ENCODE measurements at regions of chr11 and their contacts with region 1.

Region 1: DNA sequence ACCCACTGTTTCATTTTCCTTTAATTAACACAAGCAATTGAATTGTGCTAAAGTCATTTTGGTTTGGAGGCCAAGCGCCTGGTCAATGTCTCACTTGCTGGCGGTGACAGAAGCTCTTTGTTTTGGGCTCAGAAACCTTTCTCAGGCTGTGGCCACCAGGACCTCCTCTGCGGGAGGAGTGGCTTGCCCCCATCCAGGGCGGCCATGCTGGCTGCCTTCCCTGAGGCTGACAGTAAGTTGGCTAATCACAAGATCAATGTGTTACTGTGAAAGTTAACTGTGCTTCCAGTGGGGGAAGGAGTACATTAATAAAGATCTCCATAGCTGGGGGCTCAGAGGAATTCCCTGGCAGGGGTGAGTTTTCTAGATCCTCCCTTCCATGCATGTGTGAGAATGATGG is 1074.5 kb downstream of the NTM start:
- DNase-seq: no peak
- H3K4me3 ChIP-seq: no peak overlapping the region
- H3K27ac ChIP-seq: no peak overlapping the region
- H3K4me1 ChIP-seq: no peaks in the 10 kb centered on the region
- H3K27me3 ChIP-seq: no peaks in the 10 kb centered on the region
- CTCF ChIP-seq: no peak
- POLR2A ChIP-seq: no peak

Region 2: GRCh38 chr11:132650969-132651720 is 206.2 kb after region 1 on chr11:
- intact Hi-C with region 1: loop called (anchors 5 kb)
- DNase-seq: no peak
- H3K4me3 ChIP-seq: no peak overlapping the region
- H3K27ac ChIP-seq: no peak overlapping the region
- H3K4me1 ChIP-seq: no peaks in the 10 kb centered on the region
- H3K27me3 ChIP-seq: no peaks in the 10 kb centered on the region
- CTCF ChIP-seq: no peak
- POLR2A ChIP-seq: no peak

Region 3: DNA sequence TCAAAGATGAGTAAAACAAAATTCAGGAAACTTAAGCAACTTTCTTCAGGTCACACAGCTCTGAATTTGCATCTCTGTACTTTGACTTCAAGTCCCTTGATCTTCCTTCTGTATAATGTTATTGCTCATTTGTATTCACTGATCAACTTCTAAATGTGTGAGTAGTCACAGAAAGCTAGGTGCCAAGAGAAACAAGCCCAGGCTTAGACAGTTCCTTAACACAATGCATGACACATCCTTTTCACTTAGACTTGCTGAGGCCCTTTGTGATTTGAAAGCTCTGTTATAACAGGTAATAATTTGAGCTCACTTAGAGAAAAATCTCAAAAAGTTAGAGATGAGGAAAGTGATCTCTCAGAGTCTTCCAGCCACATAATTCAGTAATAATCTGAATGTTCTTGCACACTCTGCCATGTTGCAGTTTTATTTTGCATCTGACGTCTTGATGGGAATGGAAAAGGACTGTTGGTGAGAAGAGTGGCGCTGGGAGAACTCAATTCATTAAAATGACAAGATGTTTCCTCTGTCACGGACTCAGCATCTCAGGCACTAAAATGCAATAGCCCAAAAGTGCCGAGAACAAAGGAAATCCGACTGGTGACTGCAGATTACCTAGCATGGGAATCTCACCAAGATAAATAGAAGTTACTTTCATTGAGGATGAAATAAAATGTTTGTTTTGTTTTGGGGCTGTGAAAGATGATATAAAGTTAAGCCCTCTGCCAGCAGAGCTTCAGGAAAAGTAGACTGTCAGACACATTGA is 422.1 kb after region 1 on chr11:
- intact Hi-C with region 1: no loop called
- DNase-seq: no peak
- H3K4me3 ChIP-seq: no peak overlapping the region
- H3K27ac ChIP-seq: no peak overlapping the region
- H3K4me1 ChIP-seq: no peaks in the 10 kb centered on the region
- H3K27me3 ChIP-seq: no peaks in the 10 kb centered on the region
- CTCF ChIP-seq: no peak
- POLR2A ChIP-seq: no peak

Region 4: DNA sequence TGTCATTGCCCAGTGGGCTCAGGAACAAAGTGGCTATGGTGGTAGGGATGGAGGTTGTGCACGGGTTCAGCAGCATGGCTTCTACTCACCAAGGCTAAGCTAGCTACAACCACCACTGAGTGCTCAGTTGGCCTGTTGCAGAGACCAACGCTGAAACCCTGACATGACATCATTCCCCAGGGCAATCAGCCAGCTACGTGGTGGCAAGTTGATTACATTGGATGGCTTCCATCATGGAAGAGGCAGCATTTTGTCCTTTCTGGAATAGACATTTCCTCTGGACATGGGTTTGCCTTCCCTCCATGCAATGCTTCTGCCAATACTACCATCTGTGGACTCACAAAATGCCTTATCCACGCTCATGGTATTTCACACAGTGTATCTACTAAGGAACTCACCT is 453.1 kb after region 1 on chr11:
- intact Hi-C with region 1: no loop called
- DNase-seq: no peak
- H3K4me3 ChIP-seq: no peak overlapping the region
- H3K27ac ChIP-seq: no peak overlapping the region
- H3K4me1 ChIP-seq: no peaks in the 10 kb centered on the region
- H3K27me3 ChIP-seq: no peaks in the 10 kb centered on the region
- CTCF ChIP-seq: no peak
- POLR2A ChIP-seq: no peak

Measured in uterus (tissue), 4 donors.